Colonic mucosa (tissue), 4 donors: ENCODE measurements at regions of chr2 and their contacts with region 1.

Region 1: DNA sequence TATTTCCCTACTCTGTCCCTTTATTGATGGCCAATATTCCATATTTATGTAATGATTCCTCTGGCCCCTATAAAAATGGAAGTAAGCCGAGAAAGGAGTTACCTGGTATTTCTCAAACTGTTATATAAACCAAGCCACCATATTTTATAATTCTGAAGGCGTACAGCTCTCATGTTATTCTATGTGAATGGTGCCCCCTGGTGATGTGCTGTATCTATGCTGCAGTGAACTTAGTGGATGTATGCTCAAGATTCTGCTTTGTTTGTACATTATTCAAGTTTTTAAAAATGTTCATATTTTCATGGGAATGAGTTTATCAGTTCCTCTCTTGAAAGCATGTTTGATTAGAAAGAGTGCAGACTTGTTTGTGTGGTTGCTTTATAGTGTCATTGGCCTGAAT is 194.5 kb upstream of the LRRTM1 start:
- DNase-seq: peak; percentile 36
- H3K4me3 ChIP-seq: no peak overlapping the region
- H3K27ac ChIP-seq: no peak overlapping the region
- H3K4me1 ChIP-seq: no peaks in the 10 kb centered on the region
- H3K27me3 ChIP-seq: no peaks in the 10 kb centered on the region
- CTCF ChIP-seq: peak; percentile 41

Region 2: GRCh38 chr2:80073134-80073561 is 425.9 kb before region 1 on chr2:
- intact Hi-C with region 1: loop called (anchors 5 kb)
- DNase-seq: peak; percentile 34
- H3K4me3 ChIP-seq: no peak overlapping the region
- H3K27ac ChIP-seq: no peak overlapping the region
- H3K4me1 ChIP-seq: no peaks in the 10 kb centered on the region
- H3K27me3 ChIP-seq: no peaks in the 10 kb centered on the region
- CTCF ChIP-seq: peak; percentile 45

Region 3: GRCh38 chr2:80080957-80081356 is 418.1 kb before region 1 on chr2:
- intact Hi-C with region 1: loop called (anchors 5 kb)
- DNase-seq: no peak
- H3K4me3 ChIP-seq: no peak overlapping the region
- H3K27ac ChIP-seq: no peak overlapping the region
- H3K4me1 ChIP-seq: no peaks in the 10 kb centered on the region
- H3K27me3 ChIP-seq: no peaks in the 10 kb centered on the region
- CTCF ChIP-seq: no peak

Region 4: GRCh38 chr2:80288576-80288975 is 210.5 kb before region 1 on chr2:
- intact Hi-C with region 1: loop called (anchors 10 kb)
- DNase-seq: no peak
- H3K4me3 ChIP-seq: no peak overlapping the region
- H3K27ac ChIP-seq: no peak overlapping the region
- H3K4me1 ChIP-seq: no peaks in the 10 kb centered on the region
- H3K27me3 ChIP-seq: no peaks in the 10 kb centered on the region
- CTCF ChIP-seq: no peak

Region 5: DNA sequence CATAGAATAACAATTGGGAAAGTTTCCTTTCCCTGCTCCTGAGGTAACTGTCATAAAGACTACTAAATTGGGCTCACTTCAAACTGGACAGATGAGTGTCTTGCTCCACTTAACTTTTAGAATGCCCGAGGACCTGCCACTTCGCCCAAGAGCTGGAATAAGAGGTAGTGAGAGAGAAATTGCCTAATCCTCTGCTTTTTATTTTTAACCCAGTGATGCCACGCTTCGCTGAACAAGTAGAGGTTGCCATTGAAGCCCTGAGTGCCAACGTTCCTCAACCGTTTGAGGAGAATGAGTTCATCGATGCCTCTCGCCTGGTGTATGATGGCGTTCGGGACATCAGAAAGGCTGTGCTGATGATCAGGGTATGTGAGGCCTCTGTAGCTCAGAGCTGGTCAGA is 74.9 kb after region 1 on chr2:
- intact Hi-C with region 1: no loop called
- DNase-seq: no peak
- H3K4me3 ChIP-seq: no peak overlapping the region
- H3K27ac ChIP-seq: no peak overlapping the region
- H3K4me1 ChIP-seq: no peaks in the 10 kb centered on the region
- H3K27me3 ChIP-seq: no peaks in the 10 kb centered on the region
- CTCF ChIP-seq: no peak